Activated naive CD4-positive, alpha-beta T cell treated with anti-CD3 and anti-CD28 coated beads for 36 hours (primary cell): ENCODE measurements at regions of chr2 and their contacts with region 1.

Region 1: GRCh38 chr2:116510158-116510557 is 1304.3 kb upstream of the DDX18 start:
- DNase-seq: no peak
- H3K4me3 Mint-ChIP-seq: no peak overlapping the region
- H3K27ac Mint-ChIP-seq: no peak overlapping the region
- H3K4me1 Mint-ChIP-seq: no peaks in the 10 kb centered on the region
- H3K27me3 Mint-ChIP-seq: no peaks in the 10 kb centered on the region

Region 2: GRCh38 chr2:116490511-116491145 is 19.5 kb before region 1 on chr2:
- CTCF ChIA-PET with region 1: no interaction called
- intact Hi-C with region 1: no loop called
- DNase-seq: no peak
- H3K4me3 Mint-ChIP-seq: no peak overlapping the region
- H3K27ac Mint-ChIP-seq: no peak overlapping the region
- H3K4me1 Mint-ChIP-seq: no peaks in the 10 kb centered on the region
- H3K27me3 Mint-ChIP-seq: no peaks in the 10 kb centered on the region

Region 3: DNA sequence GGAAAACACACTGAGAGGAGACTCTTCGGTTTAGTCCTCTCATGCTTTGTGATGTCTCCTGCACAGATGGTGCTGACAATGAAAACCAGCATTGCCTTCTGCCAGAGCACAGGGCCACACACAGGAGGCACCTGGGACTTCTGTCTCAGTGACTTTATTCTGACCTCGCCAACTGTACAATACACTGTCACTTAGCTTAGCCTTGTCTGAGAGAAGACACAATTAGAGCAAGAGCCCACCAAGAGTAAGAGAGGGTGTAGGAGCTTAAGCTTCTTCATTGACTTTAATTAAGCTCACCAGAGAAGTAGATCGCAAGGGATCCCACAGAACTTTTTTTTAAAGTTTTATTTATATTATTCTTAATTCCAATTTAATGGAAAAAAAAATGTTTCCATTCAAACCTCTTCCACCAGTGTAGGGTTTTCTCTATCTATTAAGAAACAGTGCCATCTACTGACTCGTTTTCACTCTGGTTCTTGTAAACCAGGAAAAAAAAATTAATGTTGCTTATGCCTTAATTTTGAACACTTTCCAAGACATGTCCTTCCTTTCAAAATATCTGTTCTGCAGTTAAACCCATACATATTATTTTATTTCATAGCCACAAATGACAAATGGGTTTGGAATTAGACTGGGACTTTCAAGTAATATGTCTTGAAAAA is 1261.9 kb after region 1 on chr2:
- CTCF ChIA-PET with region 1: no interaction called
- intact Hi-C with region 1: loop called (anchors 5 kb)
- DNase-seq: no peak
- H3K4me3 Mint-ChIP-seq: no peak overlapping the region
- H3K27ac Mint-ChIP-seq: no peak overlapping the region
- H3K4me1 Mint-ChIP-seq: no peaks in the 10 kb centered on the region
- H3K27me3 Mint-ChIP-seq: peaks cover 12% of the 10 kb centered on the region